HepG2 (cell line): ENCODE measurements at regions of chr4 and their contacts with region 1.

Region 1: GRCh38 chr4:4694296-4694772 is 152.5 kb upstream of the STX18 start:
- DNase-seq: peak; percentile 92
- ATAC-seq: peak; percentile 89
- H3K4me3 ChIP-seq: peak overlapping the region in 1 of 3 experiments; percentile 31; a peak in 2 of 6 replicates
- H3K27ac ChIP-seq: peak overlapping the region; percentile 76
- H3K4me1 ChIP-seq: peaks cover 64% of the 10 kb centered on the region
- H3K27me3 ChIP-seq: no peaks in the 10 kb centered on the region
- CTCF ChIP-seq: peak; percentile 73
- EP300 ChIP-seq: peak in 1 of 2 experiments; percentile 75; a peak in 2 of 4 replicates
- POLR2A ChIP-seq: no peak
- RAD21 ChIP-seq: peak; percentile 35; the same call in 1 of the 2 replicates

Region 2: GRCh38 chr4:4640692-4641091 is 53.6 kb before region 1 on chr4:
- CTCF ChIA-PET with region 1: no interaction called
- POLR2A ChIA-PET with region 1: interaction called, 5 read pairs
- in situ Hi-C with region 1: no loop called
- intact Hi-C with region 1: loop called (anchors 5 kb)
- DNase-seq: peak; percentile 86
- ATAC-seq: peak; percentile 94
- H3K4me3 ChIP-seq: peak overlapping the region; percentile 45 to 70 (median 63)
- H3K27ac ChIP-seq: peak overlapping the region; percentile 96
- H3K4me1 ChIP-seq: peaks cover 55% of the 10 kb centered on the region
- H3K27me3 ChIP-seq: no peaks in the 10 kb centered on the region; a peak in 1 of 5 replicates
- CTCF ChIP-seq: peak; percentile 69
- EP300 ChIP-seq: peak; percentile 46 to 82; a peak in 3 of 4 replicates
- POLR2A ChIP-seq: peak; percentile 51 to 58
- RAD21 ChIP-seq: peak; percentile 71

Region 3: DNA sequence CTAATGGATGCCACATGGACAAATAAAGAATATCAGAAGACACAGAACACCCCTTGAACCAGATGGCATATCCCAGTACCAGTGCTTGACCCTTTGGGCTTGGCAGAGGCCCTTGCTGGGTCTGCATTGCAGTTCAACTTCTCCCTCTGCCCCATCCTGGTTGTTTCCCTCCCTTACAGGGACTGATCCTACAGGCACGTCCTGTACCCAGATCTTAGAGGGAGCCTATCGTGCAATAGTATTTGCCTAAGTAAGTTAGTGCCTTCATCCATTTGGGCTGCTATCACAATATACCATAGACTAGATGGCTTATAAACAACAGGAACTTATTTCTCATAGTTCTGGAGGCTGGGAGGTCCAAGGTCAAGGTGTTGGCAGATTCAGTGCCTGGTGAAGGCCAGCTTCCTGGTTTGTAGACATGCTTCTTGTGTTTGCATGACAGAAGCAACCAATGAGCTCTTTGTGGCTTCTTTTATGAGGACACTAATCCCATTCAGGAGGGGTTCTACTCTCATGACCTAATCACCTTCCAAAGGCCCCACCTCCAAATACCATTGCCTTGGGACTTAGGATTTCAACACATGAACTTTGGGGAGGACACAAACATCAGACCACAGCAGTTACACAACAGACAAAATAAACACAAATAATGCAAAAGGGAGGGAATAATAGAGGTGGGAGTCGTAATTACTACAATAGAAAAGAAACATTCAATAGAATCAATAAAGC is 18.6 kb after region 1 on chr4:
- CTCF ChIA-PET with region 1: no interaction called
- POLR2A ChIA-PET with region 1: interaction called, 10 read pairs
- in situ Hi-C with region 1: no loop called
- intact Hi-C with region 1: no loop called
- DNase-seq: peak; percentile 91
- ATAC-seq: peak; percentile 93
- H3K4me3 ChIP-seq: no peak overlapping the region
- H3K27ac ChIP-seq: peak overlapping the region; percentile 57
- H3K4me1 ChIP-seq: peaks cover 38% of the 10 kb centered on the region
- H3K27me3 ChIP-seq: no peaks in the 10 kb centered on the region
- CTCF ChIP-seq: no peak
- EP300 ChIP-seq: peak in 1 of 2 experiments; percentile 84; a peak in 2 of 4 replicates
- POLR2A ChIP-seq: no peak
- RAD21 ChIP-seq: no peak